Posterior vena cava (tissue), 2 donors: ENCODE measurements at regions of chr9 and their contacts with region 1.

Region 1: GRCh38 chr9:79123415-79123814 is 448.4 kb upstream of the TLE4 start:
- DNase-seq: no peak

Region 2: GRCh38 chr9:78939311-78940065 is 183.9 kb before region 1 on chr9:
- intact Hi-C with region 1: no loop called
- DNase-seq: no peak

Region 3: DNA sequence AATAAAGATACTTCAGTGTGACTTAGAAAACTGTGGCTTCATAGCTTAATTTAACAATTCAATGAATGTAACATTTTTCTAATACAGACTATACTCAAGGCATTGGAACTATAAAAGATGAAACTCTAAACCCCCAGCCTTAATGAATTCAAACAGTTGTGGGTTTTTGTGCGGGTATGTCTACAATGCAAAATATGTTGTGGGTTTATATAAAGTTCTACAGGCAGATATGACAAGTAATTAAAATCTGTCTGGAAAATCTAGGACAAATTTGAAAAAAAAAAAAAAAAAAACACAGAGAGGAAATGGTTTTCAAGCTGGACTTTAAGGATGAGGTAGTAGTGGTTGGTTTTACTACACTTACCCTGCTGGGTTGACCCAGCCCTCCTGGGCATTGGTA is 19.2 kb before region 1 on chr9:
- intact Hi-C with region 1: loop called in 1 of 2 experiments (anchors 2 kb)
- DNase-seq: no peak